ENCODE measurements at regions of chr18 and their contacts with region 1.

Region 1: DNA sequence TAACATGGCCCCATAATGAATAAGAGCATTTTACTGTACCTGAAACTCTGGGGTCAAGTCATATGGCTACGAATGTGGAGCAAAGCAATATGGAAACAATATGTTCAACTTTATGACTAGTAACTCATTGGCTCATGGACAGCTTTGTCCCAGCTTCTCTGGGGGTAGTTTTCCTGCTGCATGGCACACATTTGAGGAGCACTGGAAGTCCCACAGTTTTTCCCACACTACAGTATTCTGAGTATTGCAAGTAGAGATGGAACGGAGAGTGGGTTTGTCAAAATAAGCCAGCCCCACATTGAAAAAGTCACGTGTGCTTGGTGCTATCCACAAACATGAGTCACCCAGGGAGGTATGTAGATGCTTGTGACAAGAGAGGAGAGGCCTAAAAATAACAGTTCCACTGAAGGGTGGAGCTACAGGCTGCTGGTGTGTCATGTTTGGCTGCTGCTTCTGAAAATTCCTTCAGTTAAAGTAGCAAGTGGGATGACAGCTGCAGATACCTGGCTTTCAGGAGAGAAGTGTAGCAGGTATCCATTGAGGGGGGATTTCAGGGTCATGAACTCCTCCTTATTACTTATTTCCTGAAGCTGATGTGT is 48.2 kb upstream of the CTAGE1 start:
- DNase-seq: peak; percentile 94
- ATAC-seq: peak; percentile 67
- H3K4me3 ChIP-seq: peak overlapping the region; percentile 57
- H3K27ac ChIP-seq: peak overlapping the region; percentile 98
- H3K4me1 ChIP-seq: peaks cover 56% of the 10 kb centered on the region
- H3K27me3 ChIP-seq: no peaks in the 10 kb centered on the region
- CTCF ChIP-seq: no peak

Region 2: GRCh38 chr18:21914739-21915319 is 551.1 kb before region 1 on chr18:
- CTCF ChIA-PET with region 1: no interaction called
- POLR2A ChIA-PET with region 1: no interaction called
- intact Hi-C with region 1: loop called (anchors 5 kb)
- DNase-seq: peak; percentile 67
- ATAC-seq: peak; percentile 67
- H3K4me3 ChIP-seq: no peak overlapping the region
- H3K27ac ChIP-seq: no peak overlapping the region
- H3K4me1 ChIP-seq: no peaks in the 10 kb centered on the region
- H3K27me3 ChIP-seq: no peaks in the 10 kb centered on the region
- CTCF ChIP-seq: peak; percentile 87

Region 3: GRCh38 chr18:22250591-22250996 is 215.4 kb before region 1 on chr18:
- CTCF ChIA-PET with region 1: no interaction called
- POLR2A ChIA-PET with region 1: interaction called, 3 read pairs
- intact Hi-C with region 1: loop called (anchors 2 kb)
- DNase-seq: peak; percentile 92
- ATAC-seq: peak; percentile 100
- H3K4me3 ChIP-seq: no peak overlapping the region
- H3K27ac ChIP-seq: peak overlapping the region; percentile 49
- H3K4me1 ChIP-seq: peaks cover 16% of the 10 kb centered on the region
- H3K27me3 ChIP-seq: no peaks in the 10 kb centered on the region
- CTCF ChIP-seq: no peak; the same call in 1 of the 2 replicates

Region 4: DNA sequence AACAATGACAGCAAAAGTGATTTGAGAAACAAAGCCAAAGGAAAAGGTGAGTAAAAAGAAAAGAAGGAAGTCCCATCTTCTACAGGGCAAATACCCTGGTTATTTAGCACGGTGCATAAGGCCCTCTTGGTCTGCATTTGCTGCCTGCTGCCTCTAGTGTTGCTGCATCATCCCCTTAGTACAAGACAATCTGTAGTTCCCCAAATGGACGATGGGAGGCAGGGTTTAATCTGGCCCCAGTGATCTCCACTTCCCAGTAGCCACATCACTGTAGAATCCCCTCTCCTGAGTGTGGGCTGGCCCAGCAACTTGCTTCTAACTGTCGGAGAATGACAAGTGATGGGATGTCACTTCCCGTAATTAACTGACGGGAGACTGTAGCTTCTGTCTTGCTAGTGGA is 133.4 kb before region 1 on chr18:
- CTCF ChIA-PET with region 1: no interaction called
- POLR2A ChIA-PET with region 1: no interaction called
- intact Hi-C with region 1: no loop called
- DNase-seq: no peak
- ATAC-seq: no peak
- H3K4me3 ChIP-seq: no peak overlapping the region
- H3K27ac ChIP-seq: no peak overlapping the region
- H3K4me1 ChIP-seq: no peaks in the 10 kb centered on the region
- H3K27me3 ChIP-seq: no peaks in the 10 kb centered on the region
- CTCF ChIP-seq: peak; percentile 46

Region 5: DNA sequence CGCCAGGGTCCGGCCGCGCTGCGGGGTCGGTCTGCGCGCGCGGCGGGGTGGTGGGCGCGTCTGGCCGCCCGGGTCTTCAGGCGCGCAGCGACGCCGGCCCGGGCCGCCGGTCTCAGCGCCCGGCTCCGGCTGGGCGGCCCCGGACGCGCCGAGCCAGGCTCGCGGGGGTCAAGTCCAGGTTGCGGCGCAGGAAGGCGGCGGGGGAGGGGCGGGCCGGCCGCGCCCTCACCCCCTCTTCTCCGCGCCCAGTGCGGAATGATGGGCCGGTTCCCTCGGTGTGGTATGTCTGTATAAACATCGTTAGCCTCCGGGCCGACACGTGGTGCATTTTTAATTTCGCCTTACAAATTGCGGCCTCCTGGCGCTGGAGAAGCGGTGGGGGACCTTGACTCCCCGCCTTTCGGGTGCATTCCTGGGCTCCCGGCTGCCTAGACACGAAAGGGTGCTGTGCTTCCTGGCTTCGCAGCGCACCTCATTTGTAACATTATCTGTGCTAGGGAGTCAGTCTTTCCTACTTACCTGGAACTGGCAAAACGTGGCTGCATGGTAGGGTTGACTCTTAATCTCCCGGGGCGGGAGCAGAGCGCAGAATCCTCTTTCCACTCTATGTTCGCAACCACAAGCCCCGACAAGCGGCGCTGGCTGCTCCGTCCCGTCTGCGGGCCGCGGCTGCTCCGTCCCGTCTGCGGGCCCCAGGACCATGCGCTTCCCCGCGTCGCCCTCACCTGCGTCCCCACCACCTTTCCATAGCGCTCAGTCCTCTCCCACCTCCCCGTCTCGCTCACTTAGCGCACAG is 117.2 kb before region 1 on chr18:
- CTCF ChIA-PET with region 1: no interaction called
- POLR2A ChIA-PET with region 1: no interaction called
- intact Hi-C with region 1: loop called (anchors 1 kb)
- DNase-seq: peak; percentile 77
- ATAC-seq: peak; percentile 70
- H3K4me3 ChIP-seq: peak overlapping the region; percentile 65
- H3K27ac ChIP-seq: peak overlapping the region; percentile 62
- H3K4me1 ChIP-seq: peaks cover 67% of the 10 kb centered on the region
- H3K27me3 ChIP-seq: no peaks in the 10 kb centered on the region
- CTCF ChIP-seq: no peak

Region 6: DNA sequence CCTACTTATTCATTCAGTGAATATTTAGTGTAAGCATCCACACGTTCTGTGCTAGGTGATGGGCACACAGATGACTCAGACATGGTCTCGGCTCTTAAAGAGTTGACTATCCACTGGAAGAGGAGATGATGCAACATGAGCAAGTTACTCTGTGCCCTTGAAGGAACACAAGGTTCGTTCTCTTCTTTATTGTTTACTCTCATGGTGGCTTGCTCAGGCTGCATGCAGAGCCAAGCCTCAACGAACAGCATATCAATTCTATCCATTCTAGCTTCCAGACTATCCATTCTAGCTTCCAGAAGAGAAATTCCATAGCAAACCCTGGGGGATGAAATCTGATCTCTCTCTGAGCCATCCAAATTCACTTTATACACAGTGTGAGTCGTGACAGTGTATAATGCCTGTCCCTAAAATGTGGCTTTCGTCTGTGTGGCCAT is 19.9 kb after region 1 on chr18:
- CTCF ChIA-PET with region 1: no interaction called
- POLR2A ChIA-PET with region 1: interaction called, 20 read pairs
- intact Hi-C with region 1: no loop called
- DNase-seq: peak; percentile 65
- ATAC-seq: peak; percentile 75
- H3K4me3 ChIP-seq: no peak overlapping the region
- H3K27ac ChIP-seq: peak overlapping the region; percentile 28
- H3K4me1 ChIP-seq: peaks cover 22% of the 10 kb centered on the region
- H3K27me3 ChIP-seq: no peaks in the 10 kb centered on the region
- CTCF ChIP-seq: no peak

Region 7: GRCh38 chr18:22551536-22552151 is 85.7 kb after region 1 on chr18:
- CTCF ChIA-PET with region 1: no interaction called
- POLR2A ChIA-PET with region 1: interaction called, 5 read pairs
- intact Hi-C with region 1: loop called (anchors 1 kb)
- DNase-seq: peak; percentile 95
- ATAC-seq: peak; percentile 85
- H3K4me3 ChIP-seq: peak overlapping the region; percentile 10; the same call in 1 of the 2 replicates
- H3K27ac ChIP-seq: peak overlapping the region; percentile 96
- H3K4me1 ChIP-seq: peaks cover 45% of the 10 kb centered on the region
- H3K27me3 ChIP-seq: no peaks in the 10 kb centered on the region
- CTCF ChIP-seq: no peak

Region 8: DNA sequence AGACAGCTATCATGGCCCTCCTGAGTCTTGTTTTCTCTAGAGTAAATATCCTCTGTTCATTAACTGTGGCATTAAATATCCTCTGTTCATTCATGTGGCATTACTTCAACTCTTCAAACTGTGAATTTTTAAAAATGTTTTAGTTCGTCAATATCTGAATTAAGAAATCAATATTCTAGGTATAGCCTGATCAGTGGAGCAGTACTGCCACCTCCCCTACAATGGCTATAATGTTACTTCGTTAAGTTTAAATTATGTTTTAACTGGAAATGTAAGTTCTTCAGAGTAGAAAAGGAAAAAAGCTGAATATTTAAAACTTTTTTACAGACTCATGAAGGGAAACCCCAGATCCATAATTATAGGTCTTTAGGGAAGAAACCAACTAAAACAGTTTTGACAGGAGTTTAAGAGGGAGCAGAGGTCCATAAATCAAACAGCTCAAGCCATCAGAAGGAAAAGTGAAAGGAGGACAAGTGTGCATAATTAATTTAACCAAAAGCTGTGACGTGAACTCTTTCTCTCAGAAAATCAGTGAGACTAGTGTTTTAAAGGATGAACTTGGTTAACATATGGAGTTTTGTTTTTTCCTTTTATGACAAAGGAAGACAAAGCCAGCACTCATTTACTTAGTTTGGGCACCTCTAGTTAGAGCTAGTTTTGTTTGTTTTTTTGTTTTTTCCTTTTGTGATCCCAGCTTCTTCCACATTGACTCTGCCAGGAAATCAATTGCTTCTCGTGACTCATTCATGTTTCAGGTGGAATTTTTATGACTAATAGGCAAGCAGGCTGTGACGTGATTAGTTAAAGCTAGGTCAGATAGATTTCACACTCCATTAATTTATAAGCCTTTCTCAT is 512.1 kb after region 1 on chr18:
- CTCF ChIA-PET with region 1: no interaction called
- POLR2A ChIA-PET with region 1: no interaction called
- intact Hi-C with region 1: no loop called
- DNase-seq: peak; percentile 83
- ATAC-seq: peak; percentile 92
- H3K4me3 ChIP-seq: no peak overlapping the region
- H3K27ac ChIP-seq: peak overlapping the region; percentile 78
- H3K4me1 ChIP-seq: peaks cover 17% of the 10 kb centered on the region
- H3K27me3 ChIP-seq: no peaks in the 10 kb centered on the region
- CTCF ChIP-seq: no peak

Measured in PC-3 (cell line).